ENCODE measurements at regions of chr3 and their contacts with region 1.

Region 1: DNA sequence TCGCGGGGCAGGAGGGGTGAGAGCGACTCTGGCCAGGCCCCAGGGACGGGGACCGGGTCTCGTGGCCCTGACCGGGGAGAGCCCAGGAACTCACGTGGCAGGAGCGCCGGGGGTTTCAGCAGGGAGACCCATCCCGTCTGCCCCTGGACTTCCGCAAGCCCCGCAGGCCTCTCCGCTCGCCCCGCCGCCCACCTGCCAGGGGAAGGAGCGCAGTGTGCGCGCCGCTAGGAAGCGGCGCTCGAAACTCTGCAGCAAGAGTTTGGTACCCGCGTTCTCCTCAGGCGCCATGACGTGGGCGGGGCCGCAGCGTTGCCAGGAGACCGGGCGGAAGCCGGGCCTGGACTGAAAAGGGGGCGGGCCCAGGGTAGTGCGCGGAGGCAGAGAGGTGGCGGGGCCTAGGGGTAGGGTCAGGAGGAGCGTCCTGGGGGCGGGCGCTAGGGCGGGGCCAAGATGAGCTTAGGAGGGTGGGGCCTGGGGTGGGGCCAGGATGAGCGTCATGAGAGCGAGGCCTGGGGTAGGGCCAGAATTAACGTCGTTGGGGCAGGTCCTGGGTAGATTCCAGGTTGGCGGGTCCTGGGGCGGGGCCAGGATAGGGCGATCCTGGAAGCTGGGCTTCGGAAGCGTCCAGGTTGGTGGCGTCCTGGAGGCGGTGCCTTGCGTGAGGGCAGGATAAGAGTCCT is 29.7 kb downstream of the ALG1L2 start:
- DNase-seq: peak; percentile 94
- ATAC-seq: peak; percentile 100
- H3K4me3 Mint-ChIP-seq: peak overlapping the region; percentile 98
- H3K27ac Mint-ChIP-seq: peak overlapping the region; percentile 100
- H3K4me1 Mint-ChIP-seq: peaks cover 25% of the 10 kb centered on the region
- H3K27me3 Mint-ChIP-seq: no peaks in the 10 kb centered on the region
- CTCF ChIP-seq: no peak

Region 2: DNA sequence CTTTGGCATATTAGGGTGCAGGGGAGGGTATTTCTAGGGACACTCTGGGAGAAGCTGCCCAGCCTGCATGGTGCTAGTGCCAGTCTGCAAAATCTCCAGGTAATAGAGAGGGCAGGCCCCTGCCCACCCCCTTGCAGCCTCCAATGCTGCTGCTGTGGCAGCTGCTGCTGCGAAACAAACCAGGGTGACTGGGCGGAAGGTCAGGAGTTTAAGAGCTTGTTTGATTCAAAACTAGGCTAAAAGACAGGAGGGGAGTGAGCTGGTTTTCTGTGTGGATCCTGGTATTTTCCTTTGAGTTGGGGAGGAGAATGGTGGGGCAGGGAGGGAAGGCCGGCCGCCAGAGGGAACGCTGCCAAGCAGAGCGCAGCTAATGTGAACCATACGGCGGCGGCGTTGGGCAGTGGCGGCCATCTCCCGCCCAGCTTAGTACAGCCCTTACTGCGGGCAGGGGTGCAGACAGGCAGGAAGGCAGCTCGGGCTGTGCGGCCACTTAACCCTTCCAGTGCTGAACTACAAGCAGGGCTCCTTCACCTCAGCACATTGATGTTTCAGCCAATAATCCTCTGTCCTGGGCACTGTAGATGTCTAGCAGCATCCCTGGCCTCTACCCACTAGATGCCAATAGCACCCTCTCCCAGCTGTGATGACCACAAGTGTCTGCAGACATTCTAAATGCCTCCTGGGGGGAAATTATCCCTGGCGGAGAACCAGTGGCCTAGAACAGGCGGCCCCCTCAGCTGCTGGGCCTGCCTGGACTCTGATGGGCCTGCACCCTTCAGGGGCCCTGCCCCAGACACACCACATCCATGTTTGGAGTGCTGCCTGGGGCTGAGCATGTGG is 1832.3 kb before region 1 on chr3:
- CTCF ChIA-PET with region 1: no interaction called
- POLR2A ChIA-PET with region 1: no interaction called
- intact Hi-C with region 1: no loop called
- DNase-seq: no peak
- ATAC-seq: no peak
- H3K4me3 Mint-ChIP-seq: no peak overlapping the region
- H3K27ac Mint-ChIP-seq: no peak overlapping the region
- H3K4me1 Mint-ChIP-seq: no peaks in the 10 kb centered on the region
- H3K27me3 Mint-ChIP-seq: no peaks in the 10 kb centered on the region
- CTCF ChIP-seq: no peak

Region 3: DNA sequence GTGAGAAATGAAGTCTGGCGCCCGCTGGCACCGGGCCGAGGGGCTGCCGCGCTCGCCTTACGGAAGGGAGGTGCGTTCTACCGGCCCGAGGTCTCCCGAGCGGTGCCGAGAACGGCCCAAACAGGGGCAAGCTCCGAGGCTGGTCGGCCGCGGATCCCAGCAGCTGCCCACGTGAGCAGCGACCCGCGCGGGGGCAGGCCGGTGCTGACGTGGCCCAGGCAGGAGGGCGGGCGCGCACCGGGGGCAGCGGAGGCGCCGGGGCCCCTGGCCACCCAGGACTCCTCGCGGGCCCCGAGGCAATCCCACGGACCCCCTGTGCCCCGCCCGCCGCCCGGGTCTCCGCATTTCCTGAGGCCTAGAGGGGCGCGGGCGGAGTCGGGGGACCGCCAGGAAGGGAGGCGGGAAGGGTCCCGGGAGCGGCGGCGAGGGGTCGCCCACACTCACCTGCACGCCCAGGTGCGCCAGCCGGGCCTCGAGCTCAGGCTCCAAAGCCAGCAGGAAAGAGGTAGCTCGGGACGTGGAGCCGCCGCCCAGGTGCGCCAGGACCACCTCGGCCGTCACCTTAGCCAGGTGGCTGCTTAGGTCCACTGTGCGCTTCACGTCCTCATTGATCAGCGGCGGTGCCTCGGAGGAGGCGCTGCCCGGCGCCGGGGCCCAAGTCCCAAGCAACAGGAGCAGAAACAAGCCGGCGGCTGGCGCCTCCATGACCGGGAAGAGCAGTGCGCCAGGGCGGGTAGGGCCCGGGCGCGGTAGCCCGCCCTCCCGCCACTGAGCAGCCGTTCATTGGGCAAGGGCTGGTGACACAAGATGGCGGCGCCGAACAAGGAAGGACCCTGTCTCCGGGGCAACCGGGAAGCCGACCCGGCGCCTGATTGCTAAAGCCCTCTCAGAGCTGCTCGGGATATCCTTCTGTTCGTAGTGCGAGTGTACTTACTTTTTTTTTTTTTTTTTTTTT is 1461.0 kb before region 1 on chr3 and contains the start of gene RPN1:
- CTCF ChIA-PET with region 1: no interaction called
- POLR2A ChIA-PET with region 1: no interaction called
- intact Hi-C with region 1: loop called (anchors 5 kb)
- DNase-seq: peak; percentile 90
- ATAC-seq: peak; percentile 97
- H3K4me3 Mint-ChIP-seq: peak within 1 kb of the TSS; percentile 89
- H3K27ac Mint-ChIP-seq: peak within 1 kb of the TSS; percentile 86
- H3K4me1 Mint-ChIP-seq: peaks cover 41% of the 10 kb centered on the region
- H3K27me3 Mint-ChIP-seq: no peaks in the 10 kb centered on the region
- CTCF ChIP-seq: no peak
- total RNA-seq, gene RPN1: 93.4 and 95.2 TPM in 2 replicates

Region 4: DNA sequence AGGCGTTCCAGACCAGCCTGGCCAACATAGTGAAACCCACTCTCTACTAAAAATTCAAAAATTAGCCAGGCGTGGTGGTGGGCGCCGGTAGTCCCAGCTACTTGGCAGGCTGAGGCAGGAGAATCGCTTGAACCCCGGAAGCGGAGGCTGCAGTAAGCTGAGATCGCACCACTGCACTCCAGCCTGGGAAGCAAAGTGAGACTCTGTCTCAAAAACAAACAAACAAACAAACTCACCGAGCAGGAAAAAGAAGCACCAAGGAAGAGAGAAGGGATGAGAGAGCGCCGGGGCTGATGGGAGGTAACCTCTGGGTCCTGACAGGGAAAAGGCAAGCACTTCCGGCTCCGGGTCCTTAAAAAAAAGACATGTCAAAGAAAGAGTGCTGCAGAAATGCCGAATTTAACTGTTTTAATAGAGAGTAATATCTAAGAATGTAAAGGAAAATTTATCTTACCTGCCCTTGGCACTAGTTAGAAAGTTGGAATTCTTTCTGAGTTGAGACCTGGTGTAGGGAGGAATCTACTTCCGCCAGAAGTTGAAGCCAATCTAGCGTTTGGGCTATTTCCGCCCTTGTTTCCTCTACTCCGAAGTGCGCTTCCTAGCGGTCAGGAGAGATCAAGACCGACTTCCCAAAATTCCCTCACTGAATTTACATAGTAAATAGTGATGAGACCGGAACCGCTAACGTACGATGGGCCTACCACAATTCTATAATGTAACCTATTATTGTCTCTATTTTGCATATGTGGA is 712.0 kb before region 1 on chr3:
- CTCF ChIA-PET with region 1: no interaction called
- POLR2A ChIA-PET with region 1: no interaction called
- intact Hi-C with region 1: loop called (anchors 2 kb)
- DNase-seq: peak; percentile 50
- ATAC-seq: peak; percentile 80
- H3K4me3 Mint-ChIP-seq: peak overlapping the region; percentile 96
- H3K27ac Mint-ChIP-seq: peak overlapping the region; percentile 96
- H3K4me1 Mint-ChIP-seq: peaks cover 40% of the 10 kb centered on the region
- H3K27me3 Mint-ChIP-seq: no peaks in the 10 kb centered on the region
- CTCF ChIP-seq: peak; percentile 36

Region 5: DNA sequence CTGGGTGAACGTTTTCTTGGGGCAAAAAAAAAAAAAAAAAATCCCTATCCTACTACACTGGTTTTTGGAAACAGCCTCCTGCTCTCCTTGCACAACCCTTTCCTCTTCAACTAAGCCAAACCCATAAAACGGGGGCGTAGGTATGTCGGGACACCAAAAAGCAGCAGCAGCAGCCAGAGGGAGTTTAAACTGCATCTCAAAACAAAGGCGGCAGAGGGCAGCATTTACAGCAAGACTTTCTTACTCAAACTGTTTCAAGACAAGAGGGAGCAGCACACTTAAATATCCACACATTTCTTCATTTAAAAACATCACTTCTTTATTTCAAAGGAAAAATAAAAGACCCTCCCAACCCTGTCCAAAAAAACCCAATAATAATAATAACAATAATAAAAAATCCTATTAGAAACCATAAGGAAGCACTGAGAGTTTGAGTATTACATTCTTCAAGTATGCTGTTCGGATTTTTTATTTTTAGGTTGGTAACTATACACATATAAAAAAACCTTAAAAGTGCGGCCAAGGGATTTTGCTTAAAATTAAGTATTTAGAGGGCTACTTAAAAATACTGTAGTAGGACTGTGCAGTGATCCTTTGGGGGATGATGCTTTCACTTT is 461.0 kb before region 1 on chr3:
- CTCF ChIA-PET with region 1: no interaction called
- POLR2A ChIA-PET with region 1: no interaction called
- intact Hi-C with region 1: loop called (anchors 1 kb)
- DNase-seq: no peak
- ATAC-seq: peak; percentile 47
- H3K4me3 Mint-ChIP-seq: no peak overlapping the region
- H3K27ac Mint-ChIP-seq: no peak overlapping the region
- H3K4me1 Mint-ChIP-seq: peaks cover 2% of the 10 kb centered on the region
- H3K27me3 Mint-ChIP-seq: no peaks in the 10 kb centered on the region
- CTCF ChIP-seq: no peak

Region 6: GRCh38 chr3:129756871-129757270 is 354.5 kb before region 1 on chr3:
- CTCF ChIA-PET with region 1: no interaction called
- POLR2A ChIA-PET with region 1: no interaction called
- intact Hi-C with region 1: no loop called
- DNase-seq: no peak
- ATAC-seq: no peak
- H3K4me3 Mint-ChIP-seq: no peak overlapping the region
- H3K27ac Mint-ChIP-seq: no peak overlapping the region
- H3K4me1 Mint-ChIP-seq: no peaks in the 10 kb centered on the region
- H3K27me3 Mint-ChIP-seq: no peaks in the 10 kb centered on the region
- CTCF ChIP-seq: no peak

Region 7: GRCh38 chr3:129820587-129820986 is 290.7 kb before region 1 on chr3:
- CTCF ChIA-PET with region 1: no interaction called
- POLR2A ChIA-PET with region 1: no interaction called
- intact Hi-C with region 1: no loop called
- DNase-seq: no peak
- ATAC-seq: no peak
- H3K4me3 Mint-ChIP-seq: no peak overlapping the region
- H3K27ac Mint-ChIP-seq: no peak overlapping the region
- H3K4me1 Mint-ChIP-seq: peaks cover 29% of the 10 kb centered on the region
- H3K27me3 Mint-ChIP-seq: no peaks in the 10 kb centered on the region
- CTCF ChIP-seq: no peak

Region 8: GRCh38 chr3:129908381-129908780 is 202.9 kb before region 1 on chr3:
- CTCF ChIA-PET with region 1: no interaction called
- POLR2A ChIA-PET with region 1: no interaction called
- intact Hi-C with region 1: no loop called
- DNase-seq: no peak
- ATAC-seq: no peak
- H3K4me3 Mint-ChIP-seq: no peak overlapping the region
- H3K27ac Mint-ChIP-seq: no peak overlapping the region
- H3K4me1 Mint-ChIP-seq: peaks cover 2% of the 10 kb centered on the region
- H3K27me3 Mint-ChIP-seq: no peaks in the 10 kb centered on the region
- CTCF ChIP-seq: no peak

Region 9: GRCh38 chr3:129942296-129942695 is 169.0 kb before region 1 on chr3:
- CTCF ChIA-PET with region 1: interaction called, 15 read pairs
- POLR2A ChIA-PET with region 1: no interaction called
- intact Hi-C with region 1: no loop called
- DNase-seq: peak; percentile 24
- ATAC-seq: peak; percentile 72
- H3K4me3 Mint-ChIP-seq: no peak overlapping the region
- H3K27ac Mint-ChIP-seq: no peak overlapping the region
- H3K4me1 Mint-ChIP-seq: no peaks in the 10 kb centered on the region
- H3K27me3 Mint-ChIP-seq: peaks cover 4% of the 10 kb centered on the region
- CTCF ChIP-seq: no peak

Region 10: GRCh38 chr3:130746246-130747039 is 635.1 kb after region 1 on chr3 and contains the start of gene PIK3R4:
- CTCF ChIA-PET with region 1: no interaction called
- POLR2A ChIA-PET with region 1: no interaction called
- intact Hi-C with region 1: loop called (anchors 10 kb)
- DNase-seq: peak; percentile 82
- ATAC-seq: peak; percentile 80
- H3K4me3 Mint-ChIP-seq: peak within 1 kb of the TSS; percentile 87
- H3K27ac Mint-ChIP-seq: peak within 1 kb of the TSS; percentile 91
- H3K4me1 Mint-ChIP-seq: peaks cover 53% of the 10 kb centered on the region
- H3K27me3 Mint-ChIP-seq: no peaks in the 10 kb centered on the region
- CTCF ChIP-seq: no peak
- total RNA-seq, gene PIK3R4: 22.1 and 32.4 TPM in 2 replicates